Testis (tissue), 5 donors: ENCODE measurements at regions of chr16 and their contacts with region 1.

Region 1: GRCh38 chr16:30122604-30123160 is 338 bp downstream of the MAPK3 start:
- DNase-seq: no peak
- H3K4me3 ChIP-seq: peak overlapping the region; percentile 84 to 86
- H3K27ac ChIP-seq: peak overlapping the region; percentile 90 to 93
- H3K4me1 ChIP-seq: peaks cover 20% of the 10 kb centered on the region
- H3K27me3 ChIP-seq: no peaks in the 10 kb centered on the region
- CTCF ChIP-seq: no peak
- POLR2A ChIP-seq: no peak

Region 2: GRCh38 chr16:29805378-29806098 is 317.1 kb before region 1 on chr16:
- intact Hi-C with region 1: no loop called
- DNase-seq: peak; percentile 99
- H3K4me3 ChIP-seq: peak overlapping the region; percentile 66 to 89
- H3K27ac ChIP-seq: peak overlapping the region; percentile 93 to 94
- H3K4me1 ChIP-seq: peaks cover 40% of the 10 kb centered on the region
- H3K27me3 ChIP-seq: no peaks in the 10 kb centered on the region
- CTCF ChIP-seq: peak in 2 of 3 experiments; percentile 7 to 16
- POLR2A ChIP-seq: peak; percentile 25

Region 3: GRCh38 chr16:30173054-30173453 is 50.4 kb after region 1 on chr16:
- intact Hi-C with region 1: loop called (anchors 10 kb)
- DNase-seq: no peak
- H3K4me3 ChIP-seq: no peak overlapping the region
- H3K27ac ChIP-seq: no peak overlapping the region
- H3K4me1 ChIP-seq: no peaks in the 10 kb centered on the region
- H3K27me3 ChIP-seq: no peaks in the 10 kb centered on the region
- CTCF ChIP-seq: no peak
- POLR2A ChIP-seq: no peak